ENCODE measurements at regions of chr17 and their contacts with region 1.

Region 1: GRCh38 chr17:44708401-44709181 is at the start of gene DBF4B:
- DNase-seq: peak; percentile 90 to 91
- H3K4me3 ChIP-seq: peak within 1 kb of the TSS; percentile 85
- H3K4me3 Mint-ChIP-seq: no peak within 1 kb of the TSS
- H3K27ac Mint-ChIP-seq: no peak within 1 kb of the TSS
- H3K4me1 ChIP-seq: peaks cover 14% of the 10 kb centered on the region; the same call in 1 of the 2 replicates
- H3K4me1 Mint-ChIP-seq: no peaks in the 10 kb centered on the region
- H3K27me3 ChIP-seq: no peaks in the 10 kb centered on the region
- H3K27me3 Mint-ChIP-seq: no peaks in the 10 kb centered on the region
- CTCF ChIP-seq: no peak
- total RNA-seq, gene DBF4B: 31.8 and 34.2 TPM in 2 replicates

Region 2: DNA sequence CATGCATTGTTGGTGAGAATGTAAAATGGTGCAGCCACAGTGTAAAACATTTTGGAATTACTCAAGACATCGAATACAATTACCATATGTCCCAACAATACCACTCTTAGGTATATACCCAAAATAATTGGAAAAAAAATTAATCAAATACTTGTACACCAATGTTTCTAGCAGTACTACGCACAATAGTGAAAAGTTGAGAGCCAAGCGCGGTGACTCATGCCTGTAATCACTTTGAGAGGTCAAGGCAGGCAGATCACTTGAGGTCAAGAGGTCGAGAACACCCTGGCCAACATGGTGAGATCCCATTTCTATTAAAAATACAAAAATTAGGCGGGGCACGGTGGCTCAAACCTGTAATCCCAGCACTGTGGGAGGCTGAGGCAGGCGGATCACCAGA is 55.9 kb before region 1 on chr17:
- CTCF ChIA-PET with region 1: no interaction called
- POLR2A ChIA-PET with region 1: no interaction called
- intact Hi-C with region 1: no loop called
- DNase-seq: no peak
- H3K4me3 ChIP-seq: no peak overlapping the region
- H3K4me3 Mint-ChIP-seq: no peak overlapping the region
- H3K27ac Mint-ChIP-seq: no peak overlapping the region
- H3K4me1 ChIP-seq: no peaks in the 10 kb centered on the region
- H3K4me1 Mint-ChIP-seq: no peaks in the 10 kb centered on the region
- H3K27me3 ChIP-seq: no peaks in the 10 kb centered on the region
- H3K27me3 Mint-ChIP-seq: no peaks in the 10 kb centered on the region
- CTCF ChIP-seq: no peak

Region 3: DNA sequence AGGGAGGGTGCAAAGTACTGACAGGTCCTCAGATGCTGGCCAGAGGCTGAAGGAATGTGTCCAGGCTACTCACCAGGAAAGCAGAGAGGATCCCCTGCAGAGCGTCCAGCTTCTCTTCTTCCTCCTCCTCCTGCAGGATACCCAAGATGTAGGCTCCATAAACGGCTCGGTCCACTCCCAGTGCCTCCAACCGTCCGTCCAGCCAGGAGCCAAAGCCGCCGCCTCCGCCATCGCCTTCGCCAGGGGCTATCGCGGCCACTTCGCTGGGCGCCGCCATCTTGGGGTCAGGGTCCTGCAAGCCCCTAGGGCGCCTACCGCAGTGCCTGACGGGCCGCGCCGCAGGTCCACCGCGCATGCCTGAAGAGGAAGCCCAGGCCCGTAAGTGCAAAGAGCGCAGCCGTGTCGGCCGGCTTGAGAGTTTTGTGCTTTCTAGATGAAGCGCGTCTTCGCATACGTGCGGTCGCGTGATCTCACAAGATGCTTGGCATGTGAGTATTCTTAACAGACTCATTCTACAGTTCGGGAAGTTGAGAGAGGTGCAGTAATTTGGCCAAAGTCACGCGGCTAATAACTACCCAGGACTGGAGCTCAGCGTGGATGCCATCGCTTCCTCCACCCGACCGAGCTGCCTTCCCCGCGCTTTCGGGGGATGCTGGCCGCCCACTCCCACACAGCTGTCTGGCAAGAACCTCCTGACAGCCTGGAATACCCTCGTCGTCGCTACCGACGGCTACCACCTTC is 18.9 kb before region 1 on chr17 and contains the start of gene CCDC43:
- CTCF ChIA-PET with region 1: interaction called, 7 read pairs
- POLR2A ChIA-PET with region 1: interaction called, 3 read pairs
- intact Hi-C with region 1: loop called (anchors 1 kb)
- DNase-seq: peak; percentile 95 to 97
- H3K4me3 ChIP-seq: peak within 1 kb of the TSS; percentile 74
- H3K4me3 Mint-ChIP-seq: peak within 1 kb of the TSS; percentile 100
- H3K27ac Mint-ChIP-seq: peak within 1 kb of the TSS; percentile 99
- H3K4me1 ChIP-seq: 0 out of 2 replicates have a peak, but pooled peaks cover 3% of the 10 kb centered on the region
- H3K4me1 Mint-ChIP-seq: no peaks in the 10 kb centered on the region
- H3K27me3 ChIP-seq: no peaks in the 10 kb centered on the region
- H3K27me3 Mint-ChIP-seq: no peaks in the 10 kb centered on the region
- CTCF ChIP-seq: no peak
- total RNA-seq, gene CCDC43: 54.3 and 54.8 TPM in 2 replicates

Measured in Caco-2 (cell line).